Lower leg skin (tissue), 4 donors: ENCODE measurements at regions of chr10 and their contacts with region 1.

Region 1: GRCh38 chr10:101441541-101442455 is 87.8 kb downstream of the BTRC start:
- DNase-seq: no peak
- H3K4me3 ChIP-seq: no peak overlapping the region
- CTCF ChIP-seq: no peak
- POLR2A ChIP-seq: no peak

Region 2: GRCh38 chr10:101297901-101298486 is 143.8 kb before region 1 on chr10:
- intact Hi-C with region 1: loop called (anchors 10 kb)
- DNase-seq: peak; percentile 35 to 92
- H3K4me3 ChIP-seq: no peak overlapping the region
- CTCF ChIP-seq: no peak
- POLR2A ChIP-seq: no peak

Region 3: GRCh38 chr10:101405001-101405400 is 36.8 kb before region 1 on chr10:
- intact Hi-C with region 1: no loop called
- DNase-seq: no peak
- H3K4me3 ChIP-seq: no peak overlapping the region
- CTCF ChIP-seq: no peak
- POLR2A ChIP-seq: no peak